PC-3 (cell line): ENCODE measurements at regions of chr17 and their contacts with region 1.

Region 1: GRCh38 chr17:1488030-1488863 is 4.2 kb downstream of the MYO1C start:
- DNase-seq: peak; percentile 80
- ATAC-seq: peak; percentile 21
- H3K4me3 ChIP-seq: peak overlapping the region; percentile 63
- H3K27ac ChIP-seq: peak overlapping the region; percentile 49
- H3K4me1 ChIP-seq: peaks cover 20% of the 10 kb centered on the region; the same call in 1 of the 2 replicates
- H3K27me3 ChIP-seq: no peaks in the 10 kb centered on the region
- CTCF ChIP-seq: no peak

Region 2: DNA sequence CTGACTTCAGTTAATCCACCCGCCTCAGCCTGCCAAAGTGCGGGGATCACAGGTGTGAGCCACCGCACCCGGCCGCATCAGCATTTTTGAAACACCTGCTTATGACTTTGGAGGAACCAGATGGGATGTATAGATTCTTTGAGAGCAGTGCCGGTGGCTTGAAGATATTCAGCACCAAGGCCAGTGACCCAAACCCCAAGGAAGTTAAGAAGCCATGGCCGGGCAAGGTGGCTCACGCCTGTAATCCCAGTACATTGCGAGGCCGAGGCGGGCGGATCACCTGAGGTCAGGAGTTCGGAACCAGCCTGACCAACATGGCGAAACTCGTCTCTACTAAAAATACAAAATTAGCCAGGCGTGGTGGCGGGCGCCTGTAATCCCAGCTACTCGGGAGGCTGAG is 164.9 kb before region 1 on chr17:
- CTCF ChIA-PET with region 1: interaction called, 11 read pairs
- POLR2A ChIA-PET with region 1: no interaction called
- intact Hi-C with region 1: no loop called
- DNase-seq: no peak
- ATAC-seq: no peak
- H3K4me3 ChIP-seq: no peak overlapping the region
- H3K27ac ChIP-seq: no peak overlapping the region
- H3K4me1 ChIP-seq: no peaks in the 10 kb centered on the region
- H3K27me3 ChIP-seq: no peaks in the 10 kb centered on the region
- CTCF ChIP-seq: no peak

Region 3: GRCh38 chr17:1422907-1423306 is 65.3 kb before region 1 on chr17:
- CTCF ChIA-PET with region 1: no interaction called
- POLR2A ChIA-PET with region 1: no interaction called
- intact Hi-C with region 1: no loop called
- DNase-seq: peak; percentile 89
- ATAC-seq: peak; percentile 98
- H3K4me3 ChIP-seq: no peak overlapping the region; the same call in 1 of the 2 replicates
- H3K27ac ChIP-seq: peak overlapping the region; percentile 71
- H3K4me1 ChIP-seq: peaks cover 17% of the 10 kb centered on the region
- H3K27me3 ChIP-seq: no peaks in the 10 kb centered on the region
- CTCF ChIP-seq: no peak

Region 4: GRCh38 chr17:1474402-1475189 is 13.7 kb before region 1 on chr17:
- CTCF ChIA-PET with region 1: no interaction called
- POLR2A ChIA-PET with region 1: interaction called, 11 read pairs
- intact Hi-C with region 1: no loop called
- DNase-seq: no peak
- ATAC-seq: no peak
- H3K4me3 ChIP-seq: no peak overlapping the region
- H3K27ac ChIP-seq: no peak overlapping the region
- H3K4me1 ChIP-seq: no peaks in the 10 kb centered on the region
- H3K27me3 ChIP-seq: no peaks in the 10 kb centered on the region
- CTCF ChIP-seq: no peak

Region 5: DNA sequence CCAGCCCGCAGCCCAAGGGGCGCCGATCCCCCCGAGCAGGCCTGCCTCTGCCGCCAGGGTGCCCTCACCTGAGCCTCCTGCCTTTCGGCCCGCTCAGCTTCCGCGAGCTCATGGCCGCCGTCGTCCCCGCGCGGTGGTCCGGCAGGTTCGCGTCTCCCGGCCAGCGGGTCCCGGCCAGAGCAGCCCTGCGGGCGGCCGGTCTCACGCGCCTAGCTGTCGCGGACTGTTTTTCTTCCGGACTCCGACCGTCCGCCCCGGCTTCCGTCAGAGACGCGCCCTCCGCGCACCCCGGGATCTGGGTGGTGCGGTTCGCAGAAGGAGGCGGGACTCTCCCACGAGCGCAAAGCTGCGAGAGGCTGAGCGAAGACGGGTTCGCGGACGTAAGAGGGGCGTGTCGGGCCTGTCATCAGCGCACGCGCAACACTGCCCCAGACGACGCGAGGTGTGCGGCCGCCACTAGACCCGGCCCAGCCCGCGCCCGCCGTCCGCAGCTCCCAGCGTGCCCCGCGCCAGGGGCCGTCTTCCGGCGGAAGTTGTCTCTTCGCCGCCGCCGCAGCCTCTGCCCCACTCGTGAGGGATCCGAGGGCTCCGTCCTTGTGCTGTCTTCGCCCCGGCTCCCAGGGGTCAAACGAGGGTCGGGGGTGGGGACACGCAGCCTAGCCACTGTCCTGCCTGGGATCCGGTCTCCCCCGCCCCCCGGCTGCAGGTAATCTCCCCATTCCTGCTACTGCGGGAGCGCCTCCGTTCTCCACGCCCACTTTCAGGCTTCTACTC is 28.3 kb after region 1 on chr17 and contains the start of gene INPP5K:
- CTCF ChIA-PET with region 1: interaction called, 4 read pairs
- POLR2A ChIA-PET with region 1: no interaction called
- intact Hi-C with region 1: loop called (anchors 2 kb)
- DNase-seq: peak; percentile 95
- ATAC-seq: peak; percentile 89
- H3K4me3 ChIP-seq: peak within 1 kb of the TSS; percentile 99
- H3K27ac ChIP-seq: peak within 1 kb of the TSS; percentile 61
- H3K4me1 ChIP-seq: peaks cover 12% of the 10 kb centered on the region
- H3K27me3 ChIP-seq: no peaks in the 10 kb centered on the region
- CTCF ChIP-seq: no peak
- total RNA-seq, gene INPP5K: 46.4 and 52.6 TPM in 2 replicates

Region 6: GRCh38 chr17:1800240-1800639 is 312.0 kb after region 1 on chr17:
- CTCF ChIA-PET with region 1: no interaction called
- POLR2A ChIA-PET with region 1: no interaction called
- intact Hi-C with region 1: no loop called
- DNase-seq: no peak
- ATAC-seq: no peak
- H3K4me3 ChIP-seq: no peak overlapping the region
- H3K27ac ChIP-seq: no peak overlapping the region
- H3K4me1 ChIP-seq: no peaks in the 10 kb centered on the region
- H3K27me3 ChIP-seq: no peaks in the 10 kb centered on the region
- CTCF ChIP-seq: no peak